MCF 10A (cell line): ENCODE measurements at regions of chr4 and their contacts with region 1.

Region 1: DNA sequence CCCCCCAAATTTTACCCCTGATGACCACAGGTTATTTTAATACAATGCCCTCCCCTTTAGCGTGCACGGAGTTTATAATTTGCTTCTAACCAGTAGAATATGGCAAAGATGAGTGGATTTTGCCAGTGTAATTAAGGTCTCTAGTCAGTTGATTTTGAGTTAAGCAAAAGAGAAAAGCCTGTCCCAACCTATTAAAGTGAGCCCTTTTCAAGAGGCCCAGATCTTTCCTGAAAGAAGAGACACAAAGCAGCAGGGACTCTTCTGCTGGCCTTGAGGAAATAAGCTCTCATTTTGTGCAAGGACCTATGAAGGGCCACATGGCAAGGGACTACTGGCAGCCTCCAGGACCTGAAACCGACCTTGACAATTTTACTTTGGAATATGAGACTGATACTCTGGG is 61.9 kb upstream of the GABRG1 start:
- DNase-seq: no peak
- H3K4me3 Mint-ChIP-seq: no peak overlapping the region
- H3K27ac Mint-ChIP-seq: no peak overlapping the region
- H3K4me1 Mint-ChIP-seq: no peaks in the 10 kb centered on the region
- H3K27me3 Mint-ChIP-seq: no peaks in the 10 kb centered on the region
- CTCF ChIP-seq: no peak

Region 2: DNA sequence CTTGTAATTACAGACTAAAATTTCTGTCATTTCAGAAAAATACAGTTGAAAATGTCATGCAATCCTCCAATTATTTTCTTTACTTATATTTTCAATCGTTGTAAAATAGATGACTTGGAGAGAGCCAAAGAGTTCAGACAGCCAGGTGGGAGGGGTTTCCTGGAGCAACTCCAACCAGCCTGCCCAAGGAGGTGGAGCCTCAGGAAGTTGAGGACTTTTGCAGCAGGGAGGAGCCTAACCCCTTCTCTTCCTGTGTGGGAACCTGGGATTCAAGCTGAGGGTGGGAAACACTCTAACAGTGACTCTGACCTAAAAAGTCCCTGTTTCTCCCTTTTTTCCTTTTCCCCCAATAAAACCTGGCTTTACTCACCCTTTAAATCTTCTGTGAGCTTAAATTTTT is 10.3 kb after region 1 on chr4:
- CTCF ChIA-PET with region 1: interaction called, 4 read pairs
- POLR2A ChIA-PET with region 1: no interaction called
- intact Hi-C with region 1: loop called (anchors 1 kb)
- DNase-seq: no peak
- H3K4me3 Mint-ChIP-seq: no peak overlapping the region
- H3K27ac Mint-ChIP-seq: no peak overlapping the region
- H3K4me1 Mint-ChIP-seq: no peaks in the 10 kb centered on the region
- H3K27me3 Mint-ChIP-seq: no peaks in the 10 kb centered on the region
- CTCF ChIP-seq: no peak

Region 3: GRCh38 chr4:46254788-46255187 is 69.0 kb after region 1 on chr4:
- CTCF ChIA-PET with region 1: no interaction called
- POLR2A ChIA-PET with region 1: no interaction called
- intact Hi-C with region 1: no loop called
- DNase-seq: peak; percentile 18
- H3K4me3 Mint-ChIP-seq: no peak overlapping the region
- H3K27ac Mint-ChIP-seq: no peak overlapping the region
- H3K4me1 Mint-ChIP-seq: peaks cover 12% of the 10 kb centered on the region
- H3K27me3 Mint-ChIP-seq: no peaks in the 10 kb centered on the region
- CTCF ChIP-seq: no peak